Naive thymus-derived CD4-positive, alpha-beta T cell (primary cell): ENCODE measurements at regions of chr3 and their contacts with region 1.

Region 1: GRCh38 chr3:67654099-67654843 is at the start of gene SUCLG2:
- DNase-seq: peak; percentile 64 to 83 (median 77)
- ATAC-seq: peak; percentile 87
- H3K4me3 ChIP-seq: peak within 1 kb of the TSS; percentile 82
- H3K4me3 Mint-ChIP-seq: peak within 1 kb of the TSS; percentile 81 to 94 (median 90)
- H3K27ac ChIP-seq: peak within 1 kb of the TSS; percentile 87
- H3K27ac Mint-ChIP-seq: peak within 1 kb of the TSS; percentile 90 to 98 (median 93)
- H3K4me1 ChIP-seq: peaks cover 33 to 49% of the 10 kb centered on the region in 2 donors
- H3K4me1 Mint-ChIP-seq: peaks cover 45 to 77% (median 69%) of the 10 kb centered on the region in 7 donors
- H3K27me3 ChIP-seq: no peaks in the 10 kb centered on the region
- H3K27me3 Mint-ChIP-seq: no peaks in the 10 kb centered on the region
- total RNA-seq, gene SUCLG2: 49.7 to 75.9 (median 61.4) TPM

Region 2: DNA sequence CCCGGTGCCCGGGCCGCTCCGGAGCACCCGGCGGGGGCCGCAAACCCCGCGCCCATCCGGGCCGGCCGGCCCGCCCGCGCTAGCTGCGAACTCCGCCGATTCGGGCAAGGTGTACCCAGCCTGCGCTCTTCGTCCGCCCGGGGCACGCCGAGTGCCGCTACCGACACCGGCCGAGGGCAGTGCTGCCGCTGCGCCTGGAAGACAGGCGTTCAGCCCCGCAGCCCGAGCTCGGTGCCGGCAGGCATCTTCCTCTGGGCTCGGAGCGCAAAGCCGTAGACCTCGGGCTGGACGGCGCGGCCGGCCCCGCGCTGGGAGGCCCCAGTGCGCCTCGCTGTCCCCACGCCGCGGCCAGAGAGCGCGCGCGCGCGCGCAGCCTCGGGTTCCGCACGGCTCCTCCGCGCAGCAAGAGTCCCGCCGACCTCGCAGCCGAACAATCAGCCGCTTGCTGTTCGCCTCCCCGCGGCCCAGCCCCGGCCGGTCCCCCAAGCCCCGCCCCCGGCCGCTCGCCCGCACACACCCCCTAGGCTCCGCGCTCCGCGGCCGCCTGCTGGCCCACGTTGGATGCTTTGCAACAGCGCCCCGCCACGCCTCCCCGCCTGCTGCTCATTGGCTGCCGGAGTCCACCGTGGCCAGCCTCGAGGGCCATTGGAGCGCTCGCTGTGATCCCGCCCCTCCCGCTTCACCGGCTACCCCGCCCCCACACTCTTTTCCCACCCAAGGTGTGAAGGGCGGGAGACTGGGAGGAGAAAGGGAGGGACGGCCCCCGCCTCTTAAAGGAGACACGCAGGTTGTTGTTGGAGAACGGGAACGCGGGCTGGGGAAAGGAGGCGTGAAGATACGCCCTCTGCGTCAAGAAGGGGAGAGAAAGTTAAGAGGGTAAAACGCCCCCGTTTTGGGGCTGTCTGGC is 1153.4 kb before region 1 on chr3 and contains the start of gene LRIG1:
- CTCF ChIA-PET with region 1: no interaction called
- POLR2A ChIA-PET with region 1: no interaction called
- intact Hi-C with region 1: loop called (anchors 10 kb)
- DNase-seq: peak; percentile 86 to 99 (median 92)
- ATAC-seq: peak; percentile 96
- H3K4me3 ChIP-seq: peak within 1 kb of the TSS; percentile 61
- H3K4me3 Mint-ChIP-seq: peak within 1 kb of the TSS; percentile 89 to 98 (median 94)
- H3K27ac ChIP-seq: peak within 1 kb of the TSS; percentile 60
- H3K27ac Mint-ChIP-seq: peak within 1 kb of the TSS; percentile 53 to 87 (median 74)
- H3K4me1 ChIP-seq: peaks cover 39 to 42% of the 10 kb centered on the region in 2 donors
- H3K4me1 Mint-ChIP-seq: peaks cover 38 to 69% (median 64%) of the 10 kb centered on the region in 7 donors
- H3K27me3 ChIP-seq: no peaks in the 10 kb centered on the region
- H3K27me3 Mint-ChIP-seq: peaks cover 0 to 36% (median 5%) of the 10 kb centered on the region in 5 donors
- total RNA-seq, gene LRIG1: 28.5 to 46.3 (median 34.4) TPM

Region 3: DNA sequence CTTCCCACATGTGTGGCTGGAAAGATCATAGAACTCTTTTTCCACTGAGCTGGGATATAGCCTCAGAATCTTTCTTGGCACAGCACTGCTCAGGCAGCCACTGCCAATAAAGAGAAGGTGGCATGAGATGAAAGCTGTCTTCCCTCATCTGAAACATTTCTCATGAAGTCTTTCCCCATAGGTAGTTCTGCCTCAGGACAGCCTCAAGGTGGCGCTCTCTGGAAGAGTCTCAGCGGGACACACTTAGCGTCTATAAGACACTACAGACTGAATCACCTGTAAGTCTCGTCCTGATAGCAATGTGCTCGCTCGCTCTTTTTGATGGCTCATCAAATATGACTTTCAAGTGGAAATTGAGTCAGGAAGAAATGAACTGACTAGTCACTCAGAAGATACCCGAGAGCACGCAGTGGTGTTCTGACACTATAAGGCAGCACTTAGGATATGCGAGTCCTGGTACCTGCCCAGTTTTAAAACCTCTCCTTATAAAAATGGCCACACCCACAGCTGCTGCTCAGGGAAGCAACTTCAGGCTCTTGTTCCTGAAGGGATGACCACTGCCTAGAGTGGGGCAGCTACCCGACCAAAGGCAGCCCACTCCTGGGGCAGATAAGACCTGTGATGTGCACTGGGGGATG is 269.4 kb before region 1 on chr3:
- CTCF ChIA-PET with region 1: no interaction called
- POLR2A ChIA-PET with region 1: no interaction called
- intact Hi-C with region 1: loop called in 1 of 2 experiments (anchors 5 kb)
- DNase-seq: peak in 6 of 9 donors; percentile 16 to 47 (median 42)
- ATAC-seq: peak; percentile 55
- H3K4me3 ChIP-seq: no peak overlapping the region
- H3K4me3 Mint-ChIP-seq: no peak overlapping the region
- H3K27ac ChIP-seq: no peak overlapping the region
- H3K27ac Mint-ChIP-seq: peak overlapping the region in 4 of 9 donors; percentile 0 to 19 (median 14)
- H3K4me1 ChIP-seq: no peaks in the 10 kb centered on the region
- H3K4me1 Mint-ChIP-seq: peaks cover 7 to 34% (median 18%) of the 10 kb centered on the region in 7 donors
- H3K27me3 ChIP-seq: no peaks in the 10 kb centered on the region
- H3K27me3 Mint-ChIP-seq: no peaks in the 10 kb centered on the region

Region 4: GRCh38 chr3:67685499-67685898 is 31.2 kb after region 1 on chr3:
- CTCF ChIA-PET with region 1: interaction called, 4 read pairs
- POLR2A ChIA-PET with region 1: interaction called, 15 read pairs
- intact Hi-C with region 1: loop called (anchors 1 kb)
- DNase-seq: peak in 5 of 9 donors; percentile 15 to 34 (median 29)
- ATAC-seq: peak; percentile 67
- H3K4me3 ChIP-seq: peak overlapping the region; percentile 15
- H3K4me3 Mint-ChIP-seq: peak overlapping the region; percentile 60 to 82 (median 72)
- H3K27ac ChIP-seq: peak overlapping the region; percentile 54
- H3K27ac Mint-ChIP-seq: peak overlapping the region; percentile 76 to 96 (median 87)
- H3K4me1 ChIP-seq: peaks cover 8 to 21% of the 10 kb centered on the region in 2 donors
- H3K4me1 Mint-ChIP-seq: peaks cover 21 to 53% (median 32%) of the 10 kb centered on the region in 7 donors
- H3K27me3 ChIP-seq: no peaks in the 10 kb centered on the region
- H3K27me3 Mint-ChIP-seq: no peaks in the 10 kb centered on the region

Region 5: DNA sequence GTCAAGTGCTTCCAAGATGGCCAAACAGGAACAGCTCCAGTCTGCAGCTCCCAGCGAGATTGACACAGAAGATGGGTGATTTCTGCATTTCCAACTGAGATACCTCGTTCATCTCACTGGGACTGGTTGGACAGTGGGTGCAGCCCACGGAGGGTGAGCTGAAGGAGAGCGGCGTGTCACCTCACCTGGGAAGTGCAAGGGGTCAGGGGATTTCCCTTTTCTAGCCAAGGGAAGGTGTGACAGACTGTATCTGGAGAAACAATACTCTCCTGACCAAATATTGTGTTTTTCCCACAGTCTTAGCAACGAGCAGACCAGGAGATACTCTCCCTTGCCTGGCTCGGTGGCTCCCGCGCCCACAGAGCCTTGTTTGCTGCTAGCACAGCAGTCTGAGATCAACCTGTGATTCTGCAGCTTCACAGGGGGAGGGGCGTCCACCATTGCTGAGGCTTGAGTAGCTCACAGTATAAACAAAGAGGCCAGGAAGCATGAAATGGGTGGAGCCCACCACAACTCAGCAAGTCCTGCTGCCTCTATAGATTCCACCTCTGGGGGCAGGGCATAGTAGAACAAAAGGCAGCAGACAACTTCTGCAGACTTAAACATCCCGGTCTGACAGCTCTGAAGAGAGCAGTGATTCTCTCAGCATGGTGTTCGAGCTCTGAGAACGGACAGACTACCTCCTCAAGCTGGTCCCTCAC is 293.7 kb after region 1 on chr3:
- CTCF ChIA-PET with region 1: no interaction called
- POLR2A ChIA-PET with region 1: no interaction called
- intact Hi-C with region 1: loop called in 1 of 2 experiments (anchors 10 kb)
- DNase-seq: peak in 8 of 9 donors; percentile 25 to 92 (median 84)
- ATAC-seq: peak; percentile 97
- H3K4me3 ChIP-seq: peak overlapping the region; percentile 40
- H3K4me3 Mint-ChIP-seq: peak overlapping the region; percentile 76 to 92 (median 83)
- H3K27ac ChIP-seq: peak overlapping the region; percentile 38
- H3K27ac Mint-ChIP-seq: peak overlapping the region; percentile 76 to 97 (median 91)
- H3K4me1 ChIP-seq: peaks cover 6 to 26% of the 10 kb centered on the region in 2 donors
- H3K4me1 Mint-ChIP-seq: peaks cover 11 to 54% (median 39%) of the 10 kb centered on the region in 7 donors
- H3K27me3 ChIP-seq: no peaks in the 10 kb centered on the region
- H3K27me3 Mint-ChIP-seq: no peaks in the 10 kb centered on the region

Region 6: GRCh38 chr3:69084326-69085167 is 1430.3 kb after region 1 on chr3 and contains the start of gene ARL6IP5:
- CTCF ChIA-PET with region 1: no interaction called
- POLR2A ChIA-PET with region 1: interaction called, 7 read pairs
- intact Hi-C with region 1: loop called (anchors 2 to 5 kb)
- DNase-seq: peak; percentile 71 to 95 (median 93)
- ATAC-seq: peak; percentile 84
- H3K4me3 ChIP-seq: peak within 1 kb of the TSS; percentile 89
- H3K4me3 Mint-ChIP-seq: peak within 1 kb of the TSS; percentile 88 to 99 (median 97)
- H3K27ac ChIP-seq: peak within 1 kb of the TSS; percentile 76
- H3K27ac Mint-ChIP-seq: peak within 1 kb of the TSS; percentile 92 to 99 (median 98)
- H3K4me1 ChIP-seq: peaks cover 58% of the 10 kb centered on the region in 2 donors
- H3K4me1 Mint-ChIP-seq: peaks cover 44 to 72% (median 62%) of the 10 kb centered on the region in 7 donors
- H3K27me3 ChIP-seq: no peaks in the 10 kb centered on the region
- H3K27me3 Mint-ChIP-seq: no peaks in the 10 kb centered on the region
- total RNA-seq, gene ARL6IP5: 75.8 to 226 (median 119) TPM